HCT116 (cell line): ENCODE measurements at regions of chr1 and their contacts with region 1.

Region 1: DNA sequence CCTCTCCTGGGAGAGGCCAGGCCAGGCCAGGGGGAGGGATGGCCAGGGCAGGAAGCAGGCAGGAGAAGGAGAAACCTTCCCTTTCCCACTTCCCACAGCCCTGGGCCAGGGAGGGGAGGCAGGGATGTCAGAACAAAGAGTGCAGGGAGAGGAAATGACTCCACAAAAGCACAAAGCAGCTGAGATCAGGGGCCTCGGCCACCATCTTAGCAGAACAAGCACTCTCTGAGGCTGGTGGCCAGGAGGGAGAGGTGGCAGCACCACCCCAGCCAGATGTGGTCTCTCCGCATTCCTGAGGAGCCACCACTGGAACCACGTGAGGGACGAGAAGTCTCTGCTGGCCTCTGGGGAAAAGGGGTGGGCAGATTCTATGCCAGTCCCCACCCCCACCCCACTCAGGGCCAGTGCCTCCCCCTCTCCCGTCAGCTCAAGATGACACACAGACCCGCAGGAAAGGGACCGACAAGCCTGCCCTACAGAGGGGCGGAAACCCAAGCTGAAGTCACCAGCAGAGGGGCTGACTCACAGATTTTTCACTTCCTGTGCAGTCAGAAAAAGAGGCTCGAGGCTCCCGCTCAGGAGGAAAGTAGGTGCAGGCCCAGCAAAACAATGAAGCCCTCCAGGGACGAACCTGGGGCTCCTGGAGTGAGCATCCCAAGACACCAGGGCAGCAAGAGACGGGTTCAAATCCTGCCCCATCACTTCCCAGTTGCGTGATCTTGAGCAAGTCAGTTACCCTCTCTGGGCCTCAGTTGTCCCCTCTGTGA is 24.1 kb upstream of the ALDH4A1 start:
- DNase-seq: peak; percentile 93
- ATAC-seq: peak; percentile 93
- H3K4me3 ChIP-seq: peak overlapping the region; percentile 43 to 66
- H3K27ac ChIP-seq: peak overlapping the region; percentile 97
- H3K4me1 ChIP-seq: peaks cover 42 to 85% of the 10 kb centered on the region in 2 experiments
- H3K27me3 ChIP-seq: no peaks in the 10 kb centered on the region
- CTCF ChIP-seq: no peak
- POLR2A ChIP-seq: peak; percentile 48
- RAD21 ChIP-seq: no peak; the same call in 1 of the 2 replicates

Region 2: GRCh38 chr1:18734461-18735223 is 191.9 kb before region 1 on chr1:
- CTCF ChIA-PET with region 1: no interaction called
- POLR2A ChIA-PET with region 1: no interaction called
- RAD21 ChIA-PET with region 1: no interaction called
- intact Hi-C with region 1: no loop called
- DNase-seq: no peak
- ATAC-seq: no peak
- H3K4me3 ChIP-seq: no peak overlapping the region
- H3K27ac ChIP-seq: no peak overlapping the region
- H3K4me1 ChIP-seq: no peaks in the 10 kb centered on the region
- H3K27me3 ChIP-seq: peaks cover 12% of the 10 kb centered on the region; the same call in 1 of the 2 replicates
- CTCF ChIP-seq: no peak
- POLR2A ChIP-seq: no peak
- RAD21 ChIP-seq: no peak

Region 3: GRCh38 chr1:18913065-18913835 is 13.2 kb before region 1 on chr1:
- CTCF ChIA-PET with region 1: interaction called, 36 read pairs
- POLR2A ChIA-PET with region 1: interaction called, 6 read pairs
- RAD21 ChIA-PET with region 1: interaction called in 1 of 2 experiments, 3 read pairs
- intact Hi-C with region 1: no loop called
- DNase-seq: peak; percentile 50
- ATAC-seq: peak; percentile 98
- H3K4me3 ChIP-seq: no peak overlapping the region
- H3K27ac ChIP-seq: no peak overlapping the region
- H3K4me1 ChIP-seq: peaks cover 0 to 8% of the 10 kb centered on the region in 2 experiments; a peak in 1 of 4 replicates
- H3K27me3 ChIP-seq: no peaks in the 10 kb centered on the region
- CTCF ChIP-seq: peak; percentile 100
- POLR2A ChIP-seq: no peak
- RAD21 ChIP-seq: peak; percentile 97

Region 4: DNA sequence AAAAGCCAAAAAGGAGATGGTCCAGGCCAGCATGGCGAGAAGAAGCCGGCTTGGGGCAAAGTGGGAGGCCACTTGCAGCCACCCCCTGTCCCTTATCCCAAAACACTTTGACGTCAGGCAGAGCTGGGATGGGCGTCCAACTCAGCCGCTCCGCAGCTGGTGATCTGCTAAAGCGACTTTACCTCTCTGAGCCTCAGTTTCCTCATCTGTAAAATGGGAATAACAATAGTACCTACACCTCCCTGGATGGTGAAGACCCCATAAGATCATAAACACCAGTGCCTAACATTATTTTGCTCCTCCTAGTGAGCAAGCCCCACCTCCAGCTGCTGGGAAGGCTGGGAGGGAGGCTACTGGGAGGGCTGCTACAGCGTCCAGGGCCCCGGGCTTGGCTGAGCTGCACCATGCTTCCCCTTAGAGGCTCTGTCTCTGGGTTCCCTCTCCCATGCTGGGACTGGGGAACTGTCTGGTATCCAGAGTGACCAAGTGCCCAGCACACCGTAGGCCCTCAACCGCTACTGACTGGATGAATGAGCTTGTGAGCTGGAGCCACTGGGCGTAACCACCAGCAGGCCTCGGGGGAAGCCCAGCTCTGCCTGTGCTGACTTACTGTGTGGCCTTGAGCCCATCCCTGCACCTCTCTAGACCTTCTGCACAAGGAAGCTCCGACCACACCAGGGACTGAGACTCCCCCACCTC is 11.7 kb after region 1 on chr1:
- CTCF ChIA-PET with region 1: interaction called, 3 read pairs
- POLR2A ChIA-PET with region 1: interaction called, 13 read pairs
- RAD21 ChIA-PET with region 1: no interaction called
- intact Hi-C with region 1: no loop called
- DNase-seq: no peak
- ATAC-seq: 0 out of 2 replicates have a peak, but pooled peaks have one; percentile 21
- H3K4me3 ChIP-seq: no peak overlapping the region
- H3K27ac ChIP-seq: peak overlapping the region; percentile 10; the same call in 1 of the 2 replicates
- H3K4me1 ChIP-seq: peaks cover 18 to 57% of the 10 kb centered on the region in 2 experiments; a peak in 3 of 4 replicates
- H3K27me3 ChIP-seq: no peaks in the 10 kb centered on the region
- CTCF ChIP-seq: no peak
- POLR2A ChIP-seq: no peak
- RAD21 ChIP-seq: no peak